ENCODE measurements at regions of chr16 and their contacts with region 1.

Region 1: DNA sequence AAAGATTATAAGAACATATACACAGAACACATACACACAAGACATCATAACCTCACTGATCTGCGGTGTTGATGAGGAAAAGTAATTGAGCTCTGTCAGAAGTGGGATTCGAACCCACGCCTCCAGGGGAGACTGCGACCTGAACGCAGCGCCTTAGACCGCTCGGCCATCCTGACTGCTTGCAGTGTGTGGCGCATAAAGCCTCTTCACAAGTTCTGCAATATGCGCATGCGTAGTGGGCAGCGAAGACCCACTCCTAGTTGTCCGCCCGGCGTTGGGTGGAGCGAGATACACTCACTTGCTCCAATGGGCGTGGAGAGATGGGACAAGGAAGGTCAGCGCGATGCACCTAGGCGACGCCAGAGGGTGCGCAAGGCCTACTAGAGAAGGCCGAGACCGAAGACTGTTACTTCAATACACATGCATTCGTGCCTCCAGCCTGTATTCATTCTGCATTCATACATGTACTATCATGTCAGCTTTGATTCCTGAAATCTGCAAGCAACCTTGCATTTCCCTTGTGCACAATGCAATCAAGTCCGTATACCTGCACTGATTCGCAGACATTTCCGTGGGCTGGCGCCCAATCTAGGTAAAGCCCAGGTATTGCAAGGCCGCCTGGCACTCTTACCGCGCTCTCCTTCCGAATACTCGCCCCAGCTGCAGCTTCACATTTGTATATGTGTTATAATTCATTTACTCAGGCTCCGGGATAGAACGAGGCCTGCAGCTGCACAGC is 16.1 kb upstream of the PLLP start:
- DNase-seq: peak; percentile 98 to 100 (median 99)
- ATAC-seq: peak; percentile 91
- H3K4me3 ChIP-seq: peak overlapping the region; percentile 57 to 65
- H3K4me3 Mint-ChIP-seq: no peak overlapping the region
- H3K27ac ChIP-seq: peak overlapping the region; percentile 60 to 81
- H3K27ac Mint-ChIP-seq: no peak overlapping the region
- H3K4me1 ChIP-seq: peaks cover 17% of the 10 kb centered on the region
- H3K4me1 Mint-ChIP-seq: peaks cover 25% of the 10 kb centered on the region
- H3K27me3 ChIP-seq: no peaks in the 10 kb centered on the region
- H3K27me3 Mint-ChIP-seq: no peaks in the 10 kb centered on the region
- CTCF ChIP-seq: peak; percentile 82

Region 2: DNA sequence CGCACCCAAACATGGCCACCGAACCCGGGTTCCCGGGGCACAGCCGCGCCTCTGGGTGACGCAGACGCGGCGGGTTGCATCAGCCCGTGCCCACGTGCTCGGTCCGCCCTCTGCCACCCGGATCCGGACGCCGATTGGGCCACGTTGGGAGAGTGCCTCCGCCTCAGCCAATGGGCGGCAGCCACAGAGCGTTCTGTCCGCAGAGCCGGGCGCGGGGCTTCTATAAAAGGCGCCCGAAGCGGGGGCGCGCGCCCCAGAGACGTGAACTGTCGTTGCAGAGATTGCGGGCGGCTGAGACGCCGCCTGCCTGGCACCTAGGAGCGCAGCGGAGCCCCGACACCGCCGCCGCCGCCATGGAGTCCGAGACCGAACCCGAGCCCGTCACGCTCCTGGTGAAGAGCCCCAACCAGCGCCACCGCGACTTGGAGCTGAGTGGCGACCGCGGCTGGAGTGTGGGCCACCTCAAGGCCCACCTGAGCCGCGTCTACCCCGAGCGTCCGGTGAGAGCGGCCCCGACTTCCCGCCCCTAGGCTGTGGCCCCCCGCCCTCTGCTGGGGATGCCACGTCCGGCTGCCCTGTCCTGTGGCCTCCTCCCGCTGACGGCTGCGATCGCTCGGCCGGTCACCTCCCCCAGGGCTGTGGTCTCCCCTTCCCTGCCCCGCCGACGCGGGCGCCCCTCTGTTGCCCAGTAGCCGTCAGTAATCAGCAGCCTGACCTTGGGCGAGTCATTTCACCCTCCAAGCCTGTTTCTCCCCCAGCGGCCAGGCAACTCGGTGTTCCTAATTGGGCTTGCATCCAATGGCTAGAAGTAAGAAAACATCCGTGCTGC is 368.4 kb before region 1 on chr16 and contains the start of gene HERPUD1:
- CTCF ChIA-PET with region 1: no interaction called
- POLR2A ChIA-PET with region 1: no interaction called
- intact Hi-C with region 1: loop called in 1 of 2 experiments (anchors 5 kb)
- DNase-seq: peak; percentile 98 to 99 (median 99)
- ATAC-seq: peak; percentile 94
- H3K4me3 ChIP-seq: peak within 1 kb of the TSS; percentile 96 to 99
- H3K4me3 Mint-ChIP-seq: peak within 1 kb of the TSS; percentile 98
- H3K27ac ChIP-seq: peak within 1 kb of the TSS; percentile 83 to 95
- H3K27ac Mint-ChIP-seq: peak within 1 kb of the TSS; percentile 98
- H3K4me1 ChIP-seq: peaks cover 16% of the 10 kb centered on the region
- H3K4me1 Mint-ChIP-seq: peaks cover 44% of the 10 kb centered on the region
- H3K27me3 ChIP-seq: no peaks in the 10 kb centered on the region
- H3K27me3 Mint-ChIP-seq: no peaks in the 10 kb centered on the region
- CTCF ChIP-seq: no peak
- total RNA-seq, gene HERPUD1: 191 to 201 TPM

Region 3: DNA sequence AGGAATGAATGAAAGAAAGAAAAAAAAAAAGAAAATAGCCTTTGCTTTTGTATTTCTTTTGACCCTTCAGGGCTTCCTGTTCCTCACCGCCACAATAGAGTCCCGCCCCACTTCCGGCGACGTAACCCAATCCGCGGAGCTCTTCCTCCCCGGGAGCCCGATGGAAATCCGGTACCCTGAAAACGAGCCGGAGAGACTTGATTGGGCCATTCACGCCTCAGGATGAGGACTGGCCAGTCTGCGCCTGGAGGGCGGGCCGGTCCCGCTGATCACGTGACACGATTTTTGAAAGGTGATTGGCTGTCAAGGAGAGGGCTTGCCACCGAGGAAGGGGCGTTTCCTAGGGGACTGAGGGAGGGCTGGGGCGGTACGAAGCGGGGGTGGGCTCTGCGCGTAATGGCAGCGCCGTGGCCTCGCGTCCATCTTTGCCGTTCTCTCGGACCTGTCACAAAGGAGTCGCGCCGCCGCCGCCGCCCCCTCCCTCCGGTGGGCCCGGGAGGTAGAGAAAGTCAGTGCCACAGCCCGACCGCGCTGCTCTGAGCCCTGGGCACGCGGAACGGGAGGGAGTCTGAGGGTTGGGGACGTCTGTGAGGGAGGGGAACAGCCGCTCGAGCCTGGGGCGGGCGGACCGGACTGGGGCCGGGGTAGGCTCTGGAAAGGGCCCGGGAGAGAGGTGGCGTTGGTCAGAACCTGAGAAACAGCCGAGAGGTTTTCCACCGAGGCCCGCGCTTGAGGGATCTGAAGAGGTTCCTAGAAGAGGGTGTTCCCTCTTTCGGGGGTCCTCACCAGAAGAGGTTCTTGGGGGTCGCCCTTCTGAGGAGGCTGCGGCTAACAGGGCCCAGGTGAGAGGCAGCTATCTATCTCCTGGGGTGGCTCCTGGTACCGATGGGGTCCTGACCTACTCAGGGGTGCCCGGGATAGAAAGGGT is 114.3 kb before region 1 on chr16 and contains the starts of genes PSME3IP1 and RSPRY1:
- CTCF ChIA-PET with region 1: interaction called, 3 read pairs
- POLR2A ChIA-PET with region 1: interaction called, 11 read pairs
- intact Hi-C with region 1: loop called (anchors 1 kb)
- DNase-seq: peak; percentile 96 to 100 (median 98)
- ATAC-seq: peak; percentile 82
- H3K4me3 ChIP-seq: peak within 1 kb of the TSS; percentile 92 to 100
- H3K4me3 Mint-ChIP-seq: peak within 1 kb of the TSS; percentile 99
- H3K27ac ChIP-seq: peak within 1 kb of the TSS; percentile 84 to 94
- H3K27ac Mint-ChIP-seq: peak within 1 kb of the TSS; percentile 98
- H3K4me1 ChIP-seq: peaks cover 34% of the 10 kb centered on the region
- H3K4me1 Mint-ChIP-seq: peaks cover 58% of the 10 kb centered on the region
- H3K27me3 ChIP-seq: no peaks in the 10 kb centered on the region
- H3K27me3 Mint-ChIP-seq: no peaks in the 10 kb centered on the region
- CTCF ChIP-seq: no peak
- total RNA-seq, gene PSME3IP1: 82.6 to 87.2 TPM
- total RNA-seq, gene RSPRY1: 22.4 to 23.2 TPM

Region 4: DNA sequence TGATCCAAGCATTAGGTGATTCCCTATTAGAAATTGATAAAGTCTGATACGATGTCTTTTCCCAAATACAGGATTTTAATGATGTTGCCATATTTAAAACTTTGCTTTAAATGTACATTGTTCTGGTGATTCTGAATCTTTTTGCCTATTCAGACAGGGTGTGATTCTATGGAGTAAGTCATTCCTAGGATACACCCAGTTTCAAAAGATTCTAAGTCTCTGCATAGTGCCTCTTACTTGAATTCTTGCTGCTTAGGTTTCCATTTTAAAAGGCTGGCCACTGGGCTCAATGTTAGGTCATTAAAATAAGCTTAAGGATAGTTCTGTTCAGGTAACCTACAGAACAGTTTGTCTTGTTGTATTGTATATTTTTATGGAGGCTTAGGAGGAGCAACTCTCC is 77.5 kb before region 1 on chr16:
- CTCF ChIA-PET with region 1: no interaction called
- POLR2A ChIA-PET with region 1: no interaction called
- intact Hi-C with region 1: no loop called
- DNase-seq: no peak
- ATAC-seq: no peak
- H3K4me3 ChIP-seq: no peak overlapping the region
- H3K4me3 Mint-ChIP-seq: no peak overlapping the region
- H3K27ac ChIP-seq: no peak overlapping the region
- H3K27ac Mint-ChIP-seq: no peak overlapping the region
- H3K4me1 ChIP-seq: no peaks in the 10 kb centered on the region
- H3K4me1 Mint-ChIP-seq: no peaks in the 10 kb centered on the region
- H3K27me3 ChIP-seq: no peaks in the 10 kb centered on the region
- H3K27me3 Mint-ChIP-seq: no peaks in the 10 kb centered on the region
- CTCF ChIP-seq: no peak

Region 5: GRCh38 chr16:57284208-57284951 is 16.2 kb before region 1 on chr16 and contains the start of gene PLLP:
- CTCF ChIA-PET with region 1: interaction called, 4 read pairs
- POLR2A ChIA-PET with region 1: interaction called, 3 read pairs
- intact Hi-C with region 1: loop called in 1 of 2 experiments (anchors 2 kb)
- DNase-seq: peak in 6 of 9 experiments; percentile 27 to 68 (median 49)
- ATAC-seq: peak; percentile 70
- H3K4me3 ChIP-seq: peak within 1 kb of the TSS; percentile 49 to 50
- H3K4me3 Mint-ChIP-seq: peak within 1 kb of the TSS; percentile 77
- H3K27ac ChIP-seq: no peak within 1 kb of the TSS
- H3K27ac Mint-ChIP-seq: no peak within 1 kb of the TSS
- H3K4me1 ChIP-seq: peaks cover 16% of the 10 kb centered on the region
- H3K4me1 Mint-ChIP-seq: peaks cover 25% of the 10 kb centered on the region
- H3K27me3 ChIP-seq: peaks cover 0 to 13% of the 10 kb centered on the region in 2 experiments
- H3K27me3 Mint-ChIP-seq: peaks cover 3% of the 10 kb centered on the region
- CTCF ChIP-seq: no peak
- total RNA-seq, gene PLLP: 0.47 to 1.1 TPM

Region 6: GRCh38 chr16:57394444-57394843 is 93.9 kb after region 1 on chr16:
- CTCF ChIA-PET with region 1: no interaction called
- POLR2A ChIA-PET with region 1: no interaction called
- intact Hi-C with region 1: no loop called
- DNase-seq: no peak
- ATAC-seq: no peak
- H3K4me3 ChIP-seq: no peak overlapping the region
- H3K4me3 Mint-ChIP-seq: no peak overlapping the region
- H3K27ac ChIP-seq: no peak overlapping the region
- H3K27ac Mint-ChIP-seq: no peak overlapping the region
- H3K4me1 ChIP-seq: no peaks in the 10 kb centered on the region
- H3K4me1 Mint-ChIP-seq: no peaks in the 10 kb centered on the region
- H3K27me3 ChIP-seq: no peaks in the 10 kb centered on the region
- H3K27me3 Mint-ChIP-seq: peaks cover 2% of the 10 kb centered on the region
- CTCF ChIP-seq: no peak

Region 7: DNA sequence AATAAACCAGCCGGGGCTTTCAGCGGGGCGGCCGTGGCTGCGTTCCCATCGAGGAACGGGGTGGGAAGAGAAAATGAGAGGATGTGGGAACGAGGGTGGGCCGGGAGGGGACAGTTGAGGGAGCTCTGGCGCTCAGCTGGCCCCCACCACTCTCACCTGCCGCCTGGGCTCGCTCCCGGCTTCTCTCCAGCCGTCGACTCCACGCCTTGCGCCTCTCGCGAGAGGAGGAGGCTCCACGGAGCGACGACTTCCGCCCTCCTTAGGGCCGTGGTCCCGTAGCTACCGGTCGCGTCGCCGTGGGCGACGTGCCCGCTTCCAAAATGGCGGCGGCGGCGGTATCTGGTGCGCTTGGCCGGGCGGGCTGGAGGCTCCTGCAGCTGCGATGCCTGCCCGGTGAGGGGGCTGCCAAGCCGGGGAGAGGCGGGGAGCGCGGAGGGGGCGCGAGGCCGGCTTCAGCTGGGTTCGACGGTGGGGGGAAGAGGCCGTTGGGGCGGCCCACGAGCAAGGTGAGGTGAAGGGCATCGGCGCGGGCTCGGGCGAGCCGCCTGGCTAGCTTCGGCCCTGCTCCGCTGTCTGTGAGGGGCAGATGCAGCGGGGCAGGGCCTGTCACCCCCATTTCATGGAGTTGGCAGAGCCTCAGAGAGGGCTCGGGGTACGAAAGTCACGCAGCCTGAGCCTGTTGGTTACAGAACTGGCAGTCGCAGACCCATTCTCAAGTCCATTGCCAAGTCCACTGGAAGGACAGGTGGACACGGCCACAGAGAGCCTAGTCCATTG is 146.8 kb after region 1 on chr16 and contains the starts of genes CIAPIN1 and COQ9:
- CTCF ChIA-PET with region 1: no interaction called
- POLR2A ChIA-PET with region 1: interaction called, 8 read pairs
- intact Hi-C with region 1: loop called (anchors 1 kb)
- DNase-seq: peak; percentile 85 to 97 (median 92)
- ATAC-seq: peak; percentile 98
- H3K4me3 ChIP-seq: peak within 1 kb of the TSS; percentile 93 to 96
- H3K4me3 Mint-ChIP-seq: peak within 1 kb of the TSS; percentile 91
- H3K27ac ChIP-seq: peak within 1 kb of the TSS; percentile 79 to 83
- H3K27ac Mint-ChIP-seq: peak within 1 kb of the TSS; percentile 93
- H3K4me1 ChIP-seq: peaks cover 20% of the 10 kb centered on the region
- H3K4me1 Mint-ChIP-seq: peaks cover 53% of the 10 kb centered on the region
- H3K27me3 ChIP-seq: no peaks in the 10 kb centered on the region
- H3K27me3 Mint-ChIP-seq: no peaks in the 10 kb centered on the region
- CTCF ChIP-seq: no peak
- total RNA-seq, gene CIAPIN1: 28.6 to 29.7 TPM
- total RNA-seq, gene COQ9: 8.1 to 11.7 TPM

Region 8: GRCh38 chr16:57475711-57476339 is 175.3 kb after region 1 on chr16:
- CTCF ChIA-PET with region 1: no interaction called
- POLR2A ChIA-PET with region 1: no interaction called
- intact Hi-C with region 1: no loop called
- DNase-seq: peak in 8 of 9 experiments; percentile 44 to 84 (median 79)
- ATAC-seq: peak; percentile 98
- H3K4me3 ChIP-seq: peak overlapping the region in 1 of 2 experiments; percentile 21
- H3K4me3 Mint-ChIP-seq: peak overlapping the region; percentile 39
- H3K27ac ChIP-seq: no peak overlapping the region
- H3K27ac Mint-ChIP-seq: no peak overlapping the region
- H3K4me1 ChIP-seq: peaks cover 15% of the 10 kb centered on the region
- H3K4me1 Mint-ChIP-seq: peaks cover 13% of the 10 kb centered on the region
- H3K27me3 ChIP-seq: no peaks in the 10 kb centered on the region
- H3K27me3 Mint-ChIP-seq: no peaks in the 10 kb centered on the region
- CTCF ChIP-seq: peak; percentile 87

Region 9: DNA sequence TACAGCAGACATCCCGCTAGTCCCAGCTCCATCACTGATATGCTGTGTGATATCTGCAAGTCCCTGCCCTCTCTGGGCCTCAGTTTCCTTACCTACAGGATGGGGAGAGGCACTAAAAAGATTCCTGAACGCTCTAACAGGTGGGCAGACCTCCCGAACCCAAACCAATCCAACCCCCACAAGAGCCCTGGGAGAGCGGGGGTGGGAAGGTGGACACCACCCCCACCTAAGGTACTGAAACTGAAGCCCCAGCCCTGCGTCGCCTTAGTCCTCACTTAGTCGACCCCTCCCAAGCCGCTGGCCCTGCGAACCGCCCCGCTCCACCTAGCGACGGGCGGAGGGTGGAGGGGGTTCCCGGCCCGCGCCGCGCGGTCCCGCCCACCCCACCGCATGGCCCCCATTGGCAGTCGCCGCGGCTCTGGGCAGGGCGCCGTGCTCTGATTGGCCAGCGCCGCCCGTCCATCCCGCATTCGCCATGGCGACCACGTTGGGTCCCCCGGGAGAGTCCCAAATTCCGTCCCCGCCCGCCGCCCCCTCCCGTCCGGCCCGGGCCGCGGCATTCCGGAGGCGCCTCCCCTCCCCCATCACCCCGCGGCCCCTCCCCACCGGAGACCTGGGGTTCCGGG is 235.2 kb after region 1 on chr16:
- CTCF ChIA-PET with region 1: no interaction called
- POLR2A ChIA-PET with region 1: interaction called, 4 read pairs
- intact Hi-C with region 1: loop called in 1 of 2 experiments (anchors 1 kb)
- DNase-seq: peak; percentile 83 to 97 (median 92)
- ATAC-seq: peak; percentile 82
- H3K4me3 ChIP-seq: peak overlapping the region; percentile 69 to 80
- H3K4me3 Mint-ChIP-seq: peak overlapping the region; percentile 81
- H3K27ac ChIP-seq: peak overlapping the region; percentile 64 to 96
- H3K27ac Mint-ChIP-seq: peak overlapping the region; percentile 96
- H3K4me1 ChIP-seq: peaks cover 81% of the 10 kb centered on the region
- H3K4me1 Mint-ChIP-seq: peaks cover 70% of the 10 kb centered on the region
- H3K27me3 ChIP-seq: no peaks in the 10 kb centered on the region
- H3K27me3 Mint-ChIP-seq: no peaks in the 10 kb centered on the region
- CTCF ChIP-seq: no peak

Measured in CD8-positive, alpha-beta T cell (primary cell).